HepG2 (cell line): ENCODE measurements at regions of chr2 and their contacts with region 1.

Region 1: DNA sequence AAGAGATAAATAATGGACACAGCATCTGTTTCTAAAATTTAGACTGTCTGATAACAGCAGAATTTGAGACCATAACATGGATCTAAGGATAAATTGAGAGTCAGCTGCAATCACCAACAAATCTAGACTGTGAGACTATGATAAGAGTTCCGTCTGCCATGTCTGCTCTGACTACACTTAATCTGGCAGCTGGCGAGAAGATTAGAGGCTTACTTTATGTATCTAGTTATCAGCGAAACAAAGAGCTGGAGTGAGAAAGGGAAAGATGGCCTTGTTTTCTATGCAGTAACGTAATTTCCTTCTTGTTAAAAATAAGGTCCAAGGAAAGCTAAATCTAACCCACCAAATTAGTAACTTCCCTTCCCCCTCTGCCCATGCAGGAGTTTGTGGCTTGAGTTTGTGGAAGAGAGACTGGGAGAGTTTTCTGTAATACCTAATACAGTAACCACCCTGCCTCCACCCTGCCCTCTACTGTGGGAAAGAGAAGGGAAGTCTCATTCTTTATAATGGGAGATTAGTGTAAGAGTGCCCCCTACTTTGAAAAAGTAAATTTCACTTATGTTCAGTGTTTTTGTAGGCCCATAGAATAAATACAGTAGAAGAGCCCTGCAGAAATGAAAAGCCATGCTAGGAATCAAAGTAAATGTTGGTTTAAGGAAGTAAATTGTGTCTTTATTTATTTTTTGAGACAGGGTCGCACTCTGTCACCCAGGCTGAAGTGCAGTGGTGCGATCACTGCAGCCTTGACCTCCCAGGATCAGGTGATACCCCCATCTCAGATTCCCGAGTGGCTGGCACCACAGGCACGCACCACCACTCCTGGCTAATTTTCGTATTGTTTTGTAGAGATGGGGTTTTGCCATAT is 27.5 kb downstream of the EML4 start:
- DNase-seq: peak; percentile 83
- ATAC-seq: peak; percentile 73
- H3K4me3 ChIP-seq: peak overlapping the region in 1 of 3 experiments; percentile 41; a peak in 1 of 6 replicates
- H3K27ac ChIP-seq: peak overlapping the region; percentile 78
- H3K4me1 ChIP-seq: peaks cover 100% of the 10 kb centered on the region
- H3K27me3 ChIP-seq: no peaks in the 10 kb centered on the region
- CTCF ChIP-seq: peak; percentile 80
- EP300 ChIP-seq: peak; percentile 62 to 87
- POLR2A ChIP-seq: no peak
- RAD21 ChIP-seq: peak; percentile 85

Region 2: GRCh38 chr2:41853427-41854216 is 343.0 kb before region 1 on chr2:
- CTCF ChIA-PET with region 1: no interaction called
- POLR2A ChIA-PET with region 1: no interaction called
- in situ Hi-C with region 1: loop called (anchors 25 kb)
- intact Hi-C with region 1: loop called (anchors 5 kb)
- DNase-seq: peak; percentile 71
- ATAC-seq: peak; percentile 72
- H3K4me3 ChIP-seq: no peak overlapping the region
- H3K27ac ChIP-seq: no peak overlapping the region
- H3K4me1 ChIP-seq: peaks cover 20% of the 10 kb centered on the region
- H3K27me3 ChIP-seq: 0 out of 5 replicates have a peak, but pooled peaks cover 0 to 6% of the 10 kb centered on the region in 2 experiments
- CTCF ChIP-seq: peak; percentile 87
- EP300 ChIP-seq: no peak; a peak in 1 of 4 replicates
- POLR2A ChIP-seq: no peak
- RAD21 ChIP-seq: peak; percentile 81

Region 3: GRCh38 chr2:42238644-42239288 is 42.1 kb after region 1 on chr2:
- CTCF ChIA-PET with region 1: interaction called, 4 read pairs
- POLR2A ChIA-PET with region 1: no interaction called
- in situ Hi-C with region 1: no loop called
- intact Hi-C with region 1: loop called (anchors 5 kb)
- DNase-seq: peak; percentile 53
- ATAC-seq: peak; percentile 77
- H3K4me3 ChIP-seq: no peak overlapping the region
- H3K27ac ChIP-seq: no peak overlapping the region
- H3K4me1 ChIP-seq: peaks cover 100% of the 10 kb centered on the region
- H3K27me3 ChIP-seq: no peaks in the 10 kb centered on the region
- CTCF ChIP-seq: peak; percentile 76
- EP300 ChIP-seq: no peak
- POLR2A ChIP-seq: peak; percentile 25 to 33; a peak in 1 of 4 replicates
- RAD21 ChIP-seq: peak; percentile 70